ENCODE measurements at regions of chr1 and their contacts with region 1.

Region 1: DNA sequence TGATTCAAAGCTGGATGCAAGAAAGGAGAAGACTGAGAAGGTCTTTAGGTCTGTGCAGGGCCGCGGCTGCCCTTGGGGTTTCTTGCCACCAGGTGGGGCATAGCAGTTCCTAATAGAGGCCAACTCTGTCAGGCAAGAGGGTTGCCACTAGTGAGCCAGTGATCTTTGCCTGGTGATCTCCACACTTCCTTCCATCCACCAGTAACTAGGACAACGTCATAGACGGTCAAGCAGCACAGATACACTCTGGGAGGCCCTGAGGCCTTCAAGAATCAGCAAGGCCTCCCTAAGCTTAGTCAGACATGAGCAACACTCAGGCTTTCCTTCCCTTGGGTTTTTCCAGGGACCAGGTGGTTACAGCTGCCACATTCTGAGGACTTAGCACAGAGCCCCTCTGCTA is 32.9 kb upstream of the ATP2B4 start:
- DNase-seq: peak; percentile 47
- H3K4me3 Mint-ChIP-seq: no peak overlapping the region
- H3K27ac Mint-ChIP-seq: peak overlapping the region; percentile 26
- H3K4me1 Mint-ChIP-seq: peaks cover 29% of the 10 kb centered on the region
- H3K27me3 Mint-ChIP-seq: no peaks in the 10 kb centered on the region

Region 2: GRCh38 chr1:203607533-203607873 is 13.8 kb after region 1 on chr1:
- intact Hi-C with region 1: loop called (anchors 2 kb)
- DNase-seq: no peak
- H3K4me3 Mint-ChIP-seq: no peak overlapping the region
- H3K27ac Mint-ChIP-seq: peak overlapping the region; percentile 99
- H3K4me1 Mint-ChIP-seq: peaks cover 52% of the 10 kb centered on the region
- H3K27me3 Mint-ChIP-seq: no peaks in the 10 kb centered on the region

Measured in activated T-helper 1 cell treated with anti-CD3 and anti-CD28 coated beads, Interleukin-12 subunit alpha, Interleukin-12 subunit beta, Interleukin-2, Interleukin-4 antibody, amounts not matched to agents 30 ng/mL and 10 ng/mL and 1 ng/mL, durations not matched to agents 14 hours and 24 hours and 36 hours (primary cell).